Activated naive CD4-positive, alpha-beta T cell treated with anti-CD3 and anti-CD28 coated beads for 36 hours (primary cell): ENCODE measurements at regions of chr20 and their contacts with region 1.

Region 1: GRCh38 chr20:50509935-50510705 is at the start of gene PTPN1:
- DNase-seq: peak; percentile 99
- H3K4me3 Mint-ChIP-seq: peak within 1 kb of the TSS; percentile 100
- H3K27ac Mint-ChIP-seq: peak within 1 kb of the TSS; percentile 93
- H3K4me1 Mint-ChIP-seq: peaks cover 37% of the 10 kb centered on the region
- H3K27me3 Mint-ChIP-seq: no peaks in the 10 kb centered on the region
- total RNA-seq, gene PTPN1: 111 to 119 TPM

Region 2: GRCh38 chr20:50478162-50479036 is 31.7 kb before region 1 on chr20:
- CTCF ChIA-PET with region 1: interaction called, 17 read pairs
- intact Hi-C with region 1: loop called (anchors 1 kb)
- DNase-seq: peak; percentile 89
- H3K4me3 Mint-ChIP-seq: no peak overlapping the region
- H3K27ac Mint-ChIP-seq: no peak overlapping the region
- H3K4me1 Mint-ChIP-seq: peaks cover 26% of the 10 kb centered on the region
- H3K27me3 Mint-ChIP-seq: no peaks in the 10 kb centered on the region

Region 3: DNA sequence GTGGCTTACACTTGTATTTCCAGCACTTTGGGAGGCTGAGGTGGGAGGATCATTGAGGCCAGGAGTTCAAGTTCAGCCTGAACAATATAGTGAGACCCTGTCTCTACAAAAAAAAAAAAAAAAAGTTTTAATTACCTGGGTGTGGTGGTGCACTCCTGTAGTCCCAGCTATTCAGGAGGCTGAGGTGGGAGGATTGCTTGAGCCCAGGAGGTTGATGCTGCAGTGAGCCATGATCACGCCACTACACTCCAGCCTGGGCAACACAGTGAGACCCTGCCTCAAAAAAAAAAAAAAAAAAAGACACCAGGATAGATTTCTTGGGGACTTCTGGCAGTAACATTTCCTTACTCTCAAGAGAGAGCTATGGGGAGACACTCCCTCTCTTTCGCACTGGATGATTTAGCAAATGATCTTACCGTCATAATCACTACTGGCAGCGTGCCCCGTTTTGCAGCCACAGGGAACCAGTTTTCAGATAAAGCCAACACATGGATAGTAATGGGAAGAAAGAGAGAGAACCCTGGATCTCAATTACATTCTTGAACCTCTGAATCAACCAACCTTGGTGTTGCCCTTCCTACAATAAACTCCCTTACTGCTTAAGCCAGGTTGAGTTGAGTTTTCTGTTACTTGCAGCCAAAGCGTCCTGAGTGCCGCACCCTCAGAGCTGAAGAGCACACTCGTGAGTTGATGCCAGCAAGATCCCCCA is 18.0 kb before region 1 on chr20:
- CTCF ChIA-PET with region 1: interaction called, 4 read pairs
- intact Hi-C with region 1: loop called (anchors 1 kb)
- DNase-seq: no peak
- H3K4me3 Mint-ChIP-seq: no peak overlapping the region
- H3K27ac Mint-ChIP-seq: peak overlapping the region; percentile 91
- H3K4me1 Mint-ChIP-seq: peaks cover 29% of the 10 kb centered on the region
- H3K27me3 Mint-ChIP-seq: no peaks in the 10 kb centered on the region

Region 4: DNA sequence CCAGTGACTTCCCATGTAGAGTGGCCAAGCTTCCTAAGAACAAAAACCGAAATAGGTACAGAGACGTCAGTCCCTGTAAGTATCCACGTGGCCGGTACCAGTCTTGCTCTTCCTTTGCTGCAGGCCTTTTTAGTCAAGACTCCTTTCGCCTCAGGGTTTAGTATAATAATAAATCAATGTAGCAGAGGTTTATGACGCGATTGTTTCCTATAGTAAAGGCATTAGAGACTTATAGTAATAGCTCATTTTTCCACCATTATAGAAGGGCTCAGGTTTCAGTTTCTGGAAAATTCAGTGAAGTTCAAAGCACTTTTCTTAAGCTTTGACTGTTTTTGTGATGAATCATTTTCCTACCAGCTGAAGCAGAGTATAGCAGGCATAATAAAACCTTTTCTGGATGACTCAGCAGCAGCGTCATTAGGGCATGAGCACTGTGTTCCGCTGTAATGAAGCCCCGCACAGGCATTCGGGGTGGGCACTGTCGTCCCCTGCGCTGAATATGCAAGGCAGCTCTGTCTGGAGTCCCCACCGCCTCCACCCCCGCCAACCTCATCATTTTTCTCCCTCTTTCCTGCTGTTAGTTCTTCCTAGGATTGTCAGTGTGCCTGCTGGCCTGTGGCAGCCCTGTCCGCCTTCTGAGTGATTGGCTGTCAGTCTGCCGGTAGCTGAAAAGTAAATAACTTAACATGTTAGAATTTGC is 51.4 kb after region 1 on chr20:
- CTCF ChIA-PET with region 1: interaction called, 8 read pairs
- intact Hi-C with region 1: loop called (anchors 1 kb)
- DNase-seq: peak; percentile 85
- H3K4me3 Mint-ChIP-seq: peak overlapping the region; percentile 89
- H3K27ac Mint-ChIP-seq: peak overlapping the region; percentile 99
- H3K4me1 Mint-ChIP-seq: peaks cover 87% of the 10 kb centered on the region
- H3K27me3 Mint-ChIP-seq: no peaks in the 10 kb centered on the region

Region 5: GRCh38 chr20:50575847-50576720 is 66.0 kb after region 1 on chr20:
- CTCF ChIA-PET with region 1: interaction called, 51 read pairs
- intact Hi-C with region 1: no loop called
- DNase-seq: peak; percentile 80
- H3K4me3 Mint-ChIP-seq: no peak overlapping the region
- H3K27ac Mint-ChIP-seq: peak overlapping the region; percentile 54
- H3K4me1 Mint-ChIP-seq: peaks cover 41% of the 10 kb centered on the region
- H3K27me3 Mint-ChIP-seq: no peaks in the 10 kb centered on the region